Vagina (tissue), 2 donors: ENCODE measurements at regions of chr4 and their contacts with region 1.

Region 1: GRCh38 chr4:136056748-136057147 is 1475.5 kb downstream of the PCDH18 start:
- DNase-seq: no peak
- H3K4me3 ChIP-seq: no peak overlapping the region
- H3K27ac ChIP-seq: no peak overlapping the region
- H3K4me1 ChIP-seq: no peaks in the 10 kb centered on the region
- H3K27me3 ChIP-seq: no peaks in the 10 kb centered on the region
- CTCF ChIP-seq: no peak
- POLR2A ChIP-seq: no peak

Region 2: GRCh38 chr4:134865675-134866074 is 1191.1 kb before region 1 on chr4:
- intact Hi-C with region 1: loop called (anchors 5 kb)
- DNase-seq: no peak
- H3K4me3 ChIP-seq: no peak overlapping the region
- H3K27ac ChIP-seq: no peak overlapping the region
- H3K4me1 ChIP-seq: no peaks in the 10 kb centered on the region
- H3K27me3 ChIP-seq: no peaks in the 10 kb centered on the region
- CTCF ChIP-seq: no peak
- POLR2A ChIP-seq: no peak

Region 3: GRCh38 chr4:135963009-135963408 is 93.7 kb before region 1 on chr4:
- intact Hi-C with region 1: no loop called
- DNase-seq: no peak
- H3K4me3 ChIP-seq: no peak overlapping the region
- H3K27ac ChIP-seq: no peak overlapping the region
- H3K4me1 ChIP-seq: no peaks in the 10 kb centered on the region
- H3K27me3 ChIP-seq: no peaks in the 10 kb centered on the region
- CTCF ChIP-seq: no peak
- POLR2A ChIP-seq: no peak

Region 4: DNA sequence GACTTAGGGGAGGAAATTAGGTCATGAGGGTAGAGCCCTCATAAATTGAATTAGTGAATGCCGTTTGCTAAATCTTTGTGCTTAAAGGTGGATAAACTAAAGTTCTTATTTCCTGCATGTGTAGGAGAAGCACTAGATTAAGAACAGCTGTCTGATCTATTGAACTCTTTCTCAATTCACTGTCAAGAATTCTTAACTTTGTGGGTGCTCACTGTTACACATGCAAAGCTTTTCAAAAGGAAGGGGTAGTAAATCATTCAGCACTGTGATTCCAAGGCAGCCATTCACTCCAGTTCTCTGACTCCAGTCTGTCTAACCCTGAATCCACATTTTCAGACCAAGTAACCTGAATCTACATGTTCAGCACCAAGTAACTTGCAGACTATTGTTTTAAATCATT is 44.5 kb before region 1 on chr4:
- intact Hi-C with region 1: no loop called
- DNase-seq: no peak
- H3K4me3 ChIP-seq: no peak overlapping the region
- H3K27ac ChIP-seq: no peak overlapping the region
- H3K4me1 ChIP-seq: no peaks in the 10 kb centered on the region
- H3K27me3 ChIP-seq: no peaks in the 10 kb centered on the region
- CTCF ChIP-seq: no peak
- POLR2A ChIP-seq: no peak

Region 5: DNA sequence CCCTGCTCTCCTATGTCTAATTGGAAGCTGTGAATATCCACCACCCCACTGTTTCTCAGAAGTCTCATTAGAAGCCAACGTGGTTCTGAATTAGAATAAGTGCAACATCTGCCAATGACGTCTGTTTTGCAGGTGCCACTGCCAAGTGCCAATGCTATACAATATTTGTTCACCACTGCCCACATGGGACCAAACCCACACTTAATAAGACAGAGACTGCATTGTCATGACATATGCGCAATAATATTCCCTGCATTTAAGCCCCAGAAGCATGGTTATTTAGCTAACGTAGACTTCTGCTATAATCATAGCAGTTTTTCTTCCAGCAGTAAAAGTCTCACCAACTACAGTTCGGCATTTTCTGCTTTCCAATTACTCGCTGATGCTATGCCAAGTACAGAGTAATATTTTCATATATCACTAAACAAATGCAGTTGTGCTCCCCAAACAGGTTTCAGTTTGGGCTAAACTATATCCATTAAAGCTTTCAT is 1738.1 kb after region 1 on chr4:
- intact Hi-C with region 1: no loop called
- DNase-seq: no peak
- H3K4me3 ChIP-seq: no peak overlapping the region
- H3K27ac ChIP-seq: no peak overlapping the region
- H3K4me1 ChIP-seq: no peaks in the 10 kb centered on the region
- H3K27me3 ChIP-seq: no peaks in the 10 kb centered on the region
- CTCF ChIP-seq: no peak
- POLR2A ChIP-seq: no peak